ENCODE measurements at regions of chr4 and their contacts with region 1.

Region 1: DNA sequence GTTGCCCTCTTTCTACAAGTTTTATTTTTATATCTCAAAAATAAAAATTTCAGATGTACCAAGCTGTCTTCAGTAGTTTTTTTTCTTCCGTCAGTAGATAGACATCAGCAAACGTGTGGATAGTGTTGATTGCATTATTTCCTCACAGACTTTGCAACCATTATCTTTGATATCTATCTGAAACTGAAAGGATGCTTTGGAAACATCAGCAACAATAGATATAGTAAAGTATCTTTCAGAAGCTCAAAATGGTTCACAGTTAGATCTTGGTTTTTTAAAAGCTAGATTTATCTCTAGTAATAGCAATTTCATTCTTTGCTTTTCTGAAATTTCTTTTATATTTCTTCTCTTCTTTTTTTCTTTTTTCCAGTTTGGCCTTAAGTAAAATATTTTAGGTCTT is 246.9 kb upstream of the PCDH7 start:
- DNase-seq: no peak
- ATAC-seq: no peak
- H3K4me3 ChIP-seq: no peak overlapping the region
- H3K27ac ChIP-seq: no peak overlapping the region
- H3K4me1 ChIP-seq: no peaks in the 10 kb centered on the region
- H3K27me3 ChIP-seq: no peaks in the 10 kb centered on the region
- CTCF ChIP-seq: no peak
- EP300 ChIP-seq: no peak
- POLR2A ChIP-seq: no peak
- RAD21 ChIP-seq: no peak

Region 2: DNA sequence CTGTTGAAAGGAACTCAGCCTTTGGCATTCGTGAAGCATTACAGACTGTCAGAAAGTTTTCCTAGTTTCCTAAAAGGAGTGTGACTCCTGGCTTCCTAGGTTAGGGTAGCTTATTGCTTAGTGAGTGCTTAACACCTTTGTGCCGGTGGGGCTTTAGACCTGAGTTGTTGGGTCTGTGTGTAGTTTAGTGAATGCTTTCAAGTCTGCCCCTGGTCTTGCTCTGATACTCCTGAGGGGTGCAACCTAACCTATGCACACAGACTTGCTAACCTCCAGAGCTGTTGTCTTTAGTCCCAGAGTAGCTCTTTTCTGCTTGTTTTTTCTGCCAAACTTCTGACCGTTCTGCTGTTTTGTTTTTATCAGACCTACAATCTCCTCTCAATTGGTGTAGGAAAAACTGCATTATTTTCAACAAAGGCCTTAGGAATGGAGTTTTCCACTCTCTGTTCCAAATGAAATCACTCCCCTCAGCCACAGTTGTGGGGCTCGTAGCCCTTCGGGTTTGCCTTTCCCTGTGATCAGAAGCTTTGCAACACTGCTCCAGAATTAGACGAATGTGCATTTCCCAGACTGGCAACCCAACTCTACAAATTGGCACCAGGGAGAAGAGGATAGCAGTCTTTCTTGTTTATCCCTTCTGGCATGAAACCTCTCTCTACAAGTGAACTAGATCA is 1152.1 kb before region 1 on chr4:
- CTCF ChIA-PET with region 1: no interaction called
- POLR2A ChIA-PET with region 1: no interaction called
- in situ Hi-C with region 1: no loop called
- intact Hi-C with region 1: loop called (anchors 5 kb)
- DNase-seq: no peak
- ATAC-seq: no peak
- H3K4me3 ChIP-seq: no peak overlapping the region
- H3K27ac ChIP-seq: no peak overlapping the region
- H3K4me1 ChIP-seq: no peaks in the 10 kb centered on the region
- H3K27me3 ChIP-seq: no peaks in the 10 kb centered on the region
- CTCF ChIP-seq: no peak
- EP300 ChIP-seq: no peak
- POLR2A ChIP-seq: no peak
- RAD21 ChIP-seq: no peak

Region 3: DNA sequence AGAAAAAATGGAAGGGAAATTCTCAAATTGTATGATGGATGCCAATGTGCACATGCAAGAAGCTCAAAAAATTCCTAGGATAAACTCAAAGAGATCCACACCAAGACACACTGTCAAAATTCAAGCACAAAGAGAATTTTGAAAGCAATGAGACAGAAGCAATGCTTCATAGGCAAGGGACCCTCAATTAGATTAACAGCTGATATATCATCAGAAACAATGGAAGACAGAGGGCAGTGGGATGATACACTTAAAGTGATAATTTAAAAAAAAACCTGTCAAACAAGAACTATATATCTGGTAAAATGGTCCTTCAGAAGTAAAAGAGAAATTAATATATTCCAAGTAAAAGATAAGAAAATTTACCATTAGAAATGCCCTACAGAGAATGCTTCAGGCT is 59.3 kb before region 1 on chr4:
- CTCF ChIA-PET with region 1: no interaction called
- POLR2A ChIA-PET with region 1: no interaction called
- in situ Hi-C with region 1: no loop called
- intact Hi-C with region 1: no loop called
- DNase-seq: no peak
- ATAC-seq: no peak
- H3K4me3 ChIP-seq: no peak overlapping the region
- H3K27ac ChIP-seq: no peak overlapping the region
- H3K4me1 ChIP-seq: no peaks in the 10 kb centered on the region
- H3K27me3 ChIP-seq: no peaks in the 10 kb centered on the region
- CTCF ChIP-seq: no peak
- EP300 ChIP-seq: no peak
- POLR2A ChIP-seq: no peak
- RAD21 ChIP-seq: no peak

Measured in HepG2 (cell line).